Aorta (tissue), 5 donors: ENCODE measurements at regions of chr16 and their contacts with region 1.

Region 1: DNA sequence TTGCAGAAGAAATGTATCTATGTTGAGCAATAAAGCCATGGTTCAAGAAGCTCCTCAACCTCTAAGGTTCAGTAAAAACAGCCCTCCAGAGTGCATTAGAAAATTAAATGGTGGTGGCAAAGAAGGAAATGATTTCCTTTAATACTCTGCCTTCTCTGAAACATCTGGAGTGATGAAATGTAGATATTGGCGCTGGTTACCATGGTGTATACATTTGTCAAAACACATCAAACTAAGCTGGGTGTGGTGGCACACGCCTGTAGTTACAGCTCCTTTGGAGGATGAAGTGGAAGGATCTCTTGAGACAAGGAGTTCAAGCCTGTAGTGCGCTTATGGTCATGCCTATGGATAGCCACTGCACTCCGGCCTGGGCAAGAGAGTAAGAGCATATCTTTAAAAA is 6.0 kb downstream of the CAPNS2 start:
- DNase-seq: no peak
- ATAC-seq: no peak
- H3K4me3 ChIP-seq: no peak overlapping the region
- H3K27ac ChIP-seq: no peak overlapping the region
- H3K4me1 ChIP-seq: no peaks in the 10 kb centered on the region
- H3K27me3 ChIP-seq: no peaks in the 10 kb centered on the region

Region 2: GRCh38 chr16:55171241-55171640 is 401.2 kb before region 1 on chr16:
- intact Hi-C with region 1: no loop called
- DNase-seq: no peak
- ATAC-seq: no peak
- H3K4me3 ChIP-seq: no peak overlapping the region
- H3K27ac ChIP-seq: no peak overlapping the region
- H3K4me1 ChIP-seq: no peaks in the 10 kb centered on the region
- H3K27me3 ChIP-seq: no peaks in the 10 kb centered on the region

Region 3: DNA sequence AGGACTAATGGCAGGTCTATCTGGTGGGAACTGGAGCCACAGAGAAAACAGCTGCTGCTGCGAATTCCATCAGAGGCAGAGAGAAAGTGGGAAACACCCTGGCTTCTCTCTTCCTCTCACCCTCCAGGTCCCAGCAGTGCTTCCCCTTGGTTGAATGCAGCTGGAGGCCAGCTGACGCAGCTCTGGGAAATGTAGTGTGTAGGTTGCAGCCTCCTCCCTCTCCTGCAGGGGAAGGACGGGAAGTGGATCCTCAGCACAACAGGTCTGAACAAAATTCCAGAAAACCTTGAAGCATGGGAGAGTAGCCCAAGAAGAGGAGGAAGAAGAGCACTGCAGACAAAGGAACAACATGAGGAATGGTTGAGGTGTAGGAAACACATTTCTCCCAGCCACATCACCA is 161.2 kb before region 1 on chr16:
- intact Hi-C with region 1: no loop called
- DNase-seq: no peak
- ATAC-seq: no peak
- H3K4me3 ChIP-seq: no peak overlapping the region
- H3K27ac ChIP-seq: no peak overlapping the region
- H3K4me1 ChIP-seq: no peaks in the 10 kb centered on the region
- H3K27me3 ChIP-seq: no peaks in the 10 kb centered on the region

Region 4: DNA sequence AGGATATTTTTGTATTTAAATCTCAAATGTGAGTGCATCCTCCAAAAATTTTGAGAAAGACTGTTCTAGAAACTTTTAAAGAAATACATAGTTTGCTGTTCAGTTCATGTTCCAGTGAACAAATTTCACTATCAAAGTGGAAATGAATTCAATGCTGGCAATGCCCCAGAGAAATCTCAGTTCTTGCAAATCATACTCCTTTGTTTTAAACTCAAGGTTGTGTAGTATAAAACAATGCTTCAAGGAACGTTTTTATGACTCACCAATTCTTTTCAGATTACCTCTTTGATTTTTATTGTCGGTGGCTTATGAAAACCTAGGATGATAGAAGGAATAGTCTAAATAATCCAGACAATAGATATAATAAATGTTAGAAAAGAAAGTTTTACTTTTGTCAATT is 46.0 kb before region 1 on chr16:
- intact Hi-C with region 1: loop called in 1 of 2 experiments (anchors 2 kb)
- DNase-seq: no peak
- ATAC-seq: no peak
- H3K4me3 ChIP-seq: no peak overlapping the region
- H3K27ac ChIP-seq: no peak overlapping the region
- H3K4me1 ChIP-seq: no peaks in the 10 kb centered on the region
- H3K27me3 ChIP-seq: no peaks in the 10 kb centered on the region

Region 5: DNA sequence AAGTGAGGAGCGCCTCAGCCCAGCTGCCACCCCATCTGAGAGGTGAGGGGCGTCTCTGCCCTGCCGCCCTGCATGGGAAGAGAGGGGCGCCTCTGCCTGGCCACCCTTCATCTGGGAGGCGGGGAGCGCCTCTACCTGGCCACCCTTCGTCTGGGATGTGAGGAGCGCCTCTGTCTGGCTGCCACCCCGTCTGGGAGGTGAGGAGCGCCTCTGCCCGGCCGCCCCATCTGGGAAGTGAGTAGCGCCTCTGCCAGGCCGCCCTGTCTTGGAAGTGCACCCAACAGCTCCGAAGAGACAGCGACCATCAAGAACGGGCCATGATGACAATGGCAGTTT is 417.1 kb after region 1 on chr16:
- intact Hi-C with region 1: no loop called
- DNase-seq: no peak
- ATAC-seq: no peak
- H3K4me3 ChIP-seq: no peak overlapping the region
- H3K27ac ChIP-seq: no peak overlapping the region
- H3K4me1 ChIP-seq: no peaks in the 10 kb centered on the region
- H3K27me3 ChIP-seq: no peaks in the 10 kb centered on the region